ENCODE measurements at regions of chr11 and their contacts with region 1.

Region 1: GRCh38 chr11:44498089-44498871 is 67.2 kb upstream of the CD82 start:
- DNase-seq: no peak
- ATAC-seq: peak; percentile 41

Region 2: DNA sequence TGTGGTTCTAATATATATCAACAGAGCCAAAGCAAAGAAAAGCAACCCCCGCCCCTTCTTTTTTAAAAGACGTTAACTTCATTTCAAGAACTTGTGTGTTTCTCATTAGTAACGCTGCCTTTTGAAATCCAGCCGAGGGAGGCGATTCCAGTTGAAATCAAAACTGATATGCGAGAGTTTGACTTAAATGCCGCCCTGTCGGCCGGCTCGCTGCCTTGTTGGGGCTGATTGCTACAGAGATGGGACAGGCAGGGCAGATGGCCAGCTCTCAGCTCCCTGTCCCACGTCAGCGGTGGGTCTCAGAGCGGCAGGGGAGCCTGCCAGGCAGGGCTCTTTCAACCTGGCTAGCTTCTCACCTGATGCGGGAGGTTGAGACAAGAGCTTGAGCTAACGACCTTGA is 136.5 kb before region 1 on chr11:
- intact Hi-C with region 1: loop called (anchors 10 kb)
- DNase-seq: no peak
- ATAC-seq: no peak

Region 3: DNA sequence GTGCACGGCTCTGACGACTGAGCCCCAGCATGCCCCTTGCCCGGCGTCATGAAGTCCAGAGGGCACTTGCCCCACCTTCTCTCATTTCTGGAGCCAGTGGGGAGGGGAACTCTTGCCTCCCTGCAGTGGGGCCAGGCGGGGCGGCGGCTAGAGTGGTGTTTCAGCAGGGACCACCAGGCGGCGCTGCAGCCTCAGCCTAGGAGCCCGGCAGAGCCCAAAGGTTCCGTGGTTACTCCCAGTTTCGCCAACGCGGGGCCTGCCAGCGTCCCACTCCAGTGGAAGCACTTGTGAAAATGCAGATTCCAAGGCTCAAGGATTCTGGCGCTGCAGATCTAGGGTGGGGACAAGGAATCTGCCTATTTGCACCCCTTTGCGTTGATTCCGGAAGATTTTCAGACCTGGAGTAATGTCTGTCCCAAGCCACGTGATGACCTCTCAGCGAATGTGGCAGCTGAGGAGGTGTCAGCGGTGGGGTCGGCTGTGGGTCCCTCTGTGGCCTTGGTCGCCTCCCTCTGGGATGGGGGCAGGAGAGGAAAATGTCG is 122.9 kb after region 1 on chr11:
- intact Hi-C with region 1: no loop called
- DNase-seq: peak; percentile 88
- ATAC-seq: peak; percentile 84

Measured in Right ventricle myocardium superior (tissue), 1 donor.